Naive thymus-derived CD4-positive, alpha-beta T cell (primary cell): ENCODE measurements at regions of chr16 and their contacts with region 1.

Region 1: DNA sequence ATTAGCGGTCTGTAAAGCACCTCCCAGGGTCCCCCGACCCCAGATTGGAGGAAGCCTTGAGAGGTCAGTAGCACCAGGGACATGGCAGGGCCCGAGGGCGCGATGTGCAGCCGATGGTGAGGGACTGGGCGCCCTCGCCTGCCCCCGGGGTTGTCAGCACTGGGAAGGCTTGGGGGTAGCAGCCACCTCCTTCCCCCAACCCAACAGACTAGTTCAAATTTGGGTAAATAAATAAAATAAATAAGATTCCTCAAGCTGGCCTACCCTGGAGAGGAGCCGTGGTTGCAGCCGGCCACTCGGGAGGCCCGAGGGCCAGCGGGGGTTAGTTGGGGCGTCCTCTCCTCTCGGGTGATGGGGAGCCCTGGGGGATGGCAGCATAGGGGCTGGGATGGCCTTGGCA is 1.5 kb downstream of the C16orf92 start:
- DNase-seq: no peak
- ATAC-seq: no peak
- H3K4me3 ChIP-seq: no peak overlapping the region
- H3K4me3 Mint-ChIP-seq: no peak overlapping the region
- H3K27ac ChIP-seq: no peak overlapping the region
- H3K27ac Mint-ChIP-seq: no peak overlapping the region
- H3K4me1 ChIP-seq: peaks cover 8% of the 10 kb centered on the region in 2 donors
- H3K4me1 Mint-ChIP-seq: peaks cover 5 to 17% (median 10%) of the 10 kb centered on the region in 7 donors
- H3K27me3 ChIP-seq: no peaks in the 10 kb centered on the region
- H3K27me3 Mint-ChIP-seq: peaks cover 19 to 41% (median 22%) of the 10 kb centered on the region in 5 donors

Region 2: GRCh38 chr16:29815793-29816693 is 208.4 kb before region 1 on chr16 and contains the start of gene PAGR1:
- CTCF ChIA-PET with region 1: no interaction called
- POLR2A ChIA-PET with region 1: no interaction called
- intact Hi-C with region 1: loop called in 1 of 2 experiments (anchors 5 kb)
- DNase-seq: peak; percentile 92 to 99 (median 99)
- ATAC-seq: peak; percentile 87
- H3K4me3 ChIP-seq: peak within 1 kb of the TSS; percentile 99
- H3K4me3 Mint-ChIP-seq: peak within 1 kb of the TSS; percentile 85 to 100 (median 96)
- H3K27ac ChIP-seq: peak within 1 kb of the TSS; percentile 92
- H3K27ac Mint-ChIP-seq: peak within 1 kb of the TSS; percentile 95 to 99 (median 99)
- H3K4me1 ChIP-seq: peaks cover 29 to 41% of the 10 kb centered on the region in 2 donors
- H3K4me1 Mint-ChIP-seq: peaks cover 40 to 75% (median 59%) of the 10 kb centered on the region in 7 donors
- H3K27me3 ChIP-seq: no peaks in the 10 kb centered on the region
- H3K27me3 Mint-ChIP-seq: peaks cover 0 to 22% (median 0%) of the 10 kb centered on the region in 5 donors
- total RNA-seq, gene PAGR1: 17.5 to 42.0 (median 25.7) TPM

Region 3: DNA sequence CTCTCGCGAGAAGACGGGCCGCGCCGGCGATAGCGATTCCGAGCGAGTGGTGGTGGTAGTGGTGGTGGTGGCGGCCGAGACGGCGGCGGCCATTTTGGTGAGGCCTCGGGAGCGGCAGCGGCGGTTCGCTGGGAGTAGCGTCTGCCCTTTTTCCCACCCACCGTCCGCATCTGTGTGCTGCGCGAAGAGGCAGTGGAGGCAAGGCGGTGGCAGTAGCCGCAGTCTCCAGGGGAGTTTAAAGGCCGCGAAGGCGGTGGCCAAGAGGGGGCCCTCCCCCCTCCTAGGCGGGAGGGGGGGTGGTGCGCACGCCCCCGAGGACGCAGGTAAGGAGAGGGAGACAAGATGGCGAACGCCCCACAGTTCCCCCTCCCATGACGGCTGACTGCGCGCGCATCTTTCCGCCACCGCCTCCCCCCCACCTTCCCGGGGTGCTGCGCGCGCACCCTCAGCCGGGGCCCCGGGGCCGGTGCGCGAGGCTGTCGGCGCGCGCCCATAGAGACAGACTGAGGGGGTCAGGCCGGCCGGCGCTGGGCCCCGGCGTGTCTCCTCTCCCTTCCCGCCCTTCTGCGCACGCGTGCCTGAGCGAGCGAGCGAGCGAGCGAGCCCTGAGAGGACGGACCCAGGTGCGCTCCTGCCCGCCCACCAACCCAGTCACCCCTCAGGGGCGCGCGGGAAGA is 673.8 kb after region 1 on chr16:
- CTCF ChIA-PET with region 1: no interaction called
- POLR2A ChIA-PET with region 1: no interaction called
- intact Hi-C with region 1: no loop called
- DNase-seq: peak; percentile 98 to 100 (median 99)
- ATAC-seq: peak; percentile 86
- H3K4me3 ChIP-seq: peak overlapping the region; percentile 86
- H3K4me3 Mint-ChIP-seq: peak overlapping the region; percentile 87 to 99 (median 97)
- H3K27ac ChIP-seq: peak overlapping the region; percentile 99
- H3K27ac Mint-ChIP-seq: peak overlapping the region; percentile 99 to 100 (median 100)
- H3K4me1 ChIP-seq: peaks cover 15 to 35% of the 10 kb centered on the region in 2 donors
- H3K4me1 Mint-ChIP-seq: peaks cover 26 to 48% (median 41%) of the 10 kb centered on the region in 7 donors
- H3K27me3 ChIP-seq: no peaks in the 10 kb centered on the region
- H3K27me3 Mint-ChIP-seq: no peaks in the 10 kb centered on the region